MCF 10A (cell line): ENCODE measurements at regions of chr1 and their contacts with region 1.

Region 1: DNA sequence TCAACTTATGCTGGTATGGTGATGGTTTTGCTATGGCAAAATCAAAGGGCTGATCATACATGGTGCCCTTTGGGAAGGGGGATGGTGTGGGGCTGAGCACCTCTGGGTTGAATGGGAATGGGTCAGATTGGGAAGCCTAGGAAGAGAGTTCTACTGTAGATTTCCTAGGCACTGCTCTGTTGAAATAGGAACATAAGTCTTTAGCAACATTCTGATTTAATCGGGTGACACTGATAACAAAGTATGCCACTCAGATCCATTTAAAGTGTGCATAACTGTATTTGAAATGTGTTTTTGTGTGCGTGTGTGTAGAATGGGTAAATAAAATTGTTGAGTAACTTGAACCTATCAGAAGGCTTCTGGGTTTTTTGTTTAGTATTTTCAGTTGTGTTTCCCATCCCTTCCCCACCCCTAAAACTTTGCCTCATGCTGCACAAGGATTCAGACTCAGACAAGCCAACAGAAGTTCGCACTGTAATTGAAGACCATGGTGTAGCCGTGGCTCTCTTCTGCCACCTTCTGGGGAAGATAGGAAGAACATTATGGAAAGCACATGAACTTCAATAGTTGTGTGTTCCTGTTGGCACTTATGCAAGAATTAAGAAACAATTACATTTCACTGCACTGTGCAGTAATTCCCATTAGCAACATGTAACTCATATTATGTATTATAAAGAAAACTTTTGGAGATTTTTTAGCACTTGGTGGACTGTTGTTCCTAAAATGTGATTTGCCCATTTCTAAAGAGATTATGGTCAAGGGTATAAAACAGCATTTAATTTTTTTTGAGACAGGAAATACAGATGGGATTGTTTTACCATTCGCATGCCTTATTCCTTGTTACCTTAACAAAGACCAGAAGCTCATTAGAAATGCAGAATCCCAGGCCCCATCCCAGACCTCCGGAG is 10.9 kb upstream of the C4BPB start:
- DNase-seq: peak; percentile 96
- H3K4me3 Mint-ChIP-seq: no peak overlapping the region
- H3K27ac Mint-ChIP-seq: no peak overlapping the region
- H3K4me1 Mint-ChIP-seq: peaks cover 23% of the 10 kb centered on the region
- H3K27me3 Mint-ChIP-seq: peaks cover 7% of the 10 kb centered on the region
- CTCF ChIP-seq: peak; percentile 99

Region 2: GRCh38 chr1:206635080-206635977 is 442.4 kb before region 1 on chr1 and contains the start of gene DYRK3:
- CTCF ChIA-PET with region 1: no interaction called
- POLR2A ChIA-PET with region 1: interaction called, 4 read pairs
- intact Hi-C with region 1: loop called (anchors 10 kb)
- DNase-seq: peak; percentile 99
- H3K4me3 Mint-ChIP-seq: peak within 1 kb of the TSS; percentile 89
- H3K27ac Mint-ChIP-seq: peak within 1 kb of the TSS; percentile 82
- H3K4me1 Mint-ChIP-seq: peaks cover 38% of the 10 kb centered on the region
- H3K27me3 Mint-ChIP-seq: no peaks in the 10 kb centered on the region
- CTCF ChIP-seq: no peak
- total RNA-seq, gene DYRK3: 45.4 and 58.5 TPM in 2 replicates

Region 3: DNA sequence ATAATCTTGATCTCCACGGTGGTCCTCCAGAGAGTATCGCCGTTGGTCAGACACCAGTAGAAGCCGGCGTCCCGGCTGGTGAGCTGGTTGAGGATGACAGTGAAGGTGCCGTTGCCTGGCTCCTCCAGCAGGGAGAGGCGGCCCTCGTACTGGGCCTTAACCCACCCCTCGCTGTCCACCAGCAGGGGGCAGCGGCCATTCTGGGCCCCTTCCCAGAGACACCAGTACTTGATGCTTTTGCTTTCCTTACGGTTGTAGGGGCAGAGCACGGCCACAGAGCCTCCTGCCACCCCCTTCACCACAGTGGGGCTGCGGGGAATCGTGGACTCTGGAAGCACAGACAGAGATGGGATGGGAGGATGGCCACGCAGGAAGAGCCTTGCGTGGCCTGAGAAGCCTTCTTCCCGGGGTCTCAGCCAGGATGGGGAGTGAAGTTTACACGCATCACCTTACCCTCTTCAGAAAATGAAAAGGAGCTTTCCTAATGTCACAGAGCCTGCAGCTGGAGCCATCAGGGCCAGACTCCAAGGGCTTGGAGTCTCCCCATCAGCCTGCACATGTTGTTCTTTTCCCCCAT is 142.1 kb before region 1 on chr1:
- CTCF ChIA-PET with region 1: no interaction called
- POLR2A ChIA-PET with region 1: no interaction called
- intact Hi-C with region 1: loop called (anchors 1 kb)
- DNase-seq: peak; percentile 62
- H3K4me3 Mint-ChIP-seq: no peak overlapping the region
- H3K27ac Mint-ChIP-seq: no peak overlapping the region
- H3K4me1 Mint-ChIP-seq: peaks cover 8% of the 10 kb centered on the region
- H3K27me3 Mint-ChIP-seq: no peaks in the 10 kb centered on the region
- CTCF ChIP-seq: peak; percentile 59

Region 4: DNA sequence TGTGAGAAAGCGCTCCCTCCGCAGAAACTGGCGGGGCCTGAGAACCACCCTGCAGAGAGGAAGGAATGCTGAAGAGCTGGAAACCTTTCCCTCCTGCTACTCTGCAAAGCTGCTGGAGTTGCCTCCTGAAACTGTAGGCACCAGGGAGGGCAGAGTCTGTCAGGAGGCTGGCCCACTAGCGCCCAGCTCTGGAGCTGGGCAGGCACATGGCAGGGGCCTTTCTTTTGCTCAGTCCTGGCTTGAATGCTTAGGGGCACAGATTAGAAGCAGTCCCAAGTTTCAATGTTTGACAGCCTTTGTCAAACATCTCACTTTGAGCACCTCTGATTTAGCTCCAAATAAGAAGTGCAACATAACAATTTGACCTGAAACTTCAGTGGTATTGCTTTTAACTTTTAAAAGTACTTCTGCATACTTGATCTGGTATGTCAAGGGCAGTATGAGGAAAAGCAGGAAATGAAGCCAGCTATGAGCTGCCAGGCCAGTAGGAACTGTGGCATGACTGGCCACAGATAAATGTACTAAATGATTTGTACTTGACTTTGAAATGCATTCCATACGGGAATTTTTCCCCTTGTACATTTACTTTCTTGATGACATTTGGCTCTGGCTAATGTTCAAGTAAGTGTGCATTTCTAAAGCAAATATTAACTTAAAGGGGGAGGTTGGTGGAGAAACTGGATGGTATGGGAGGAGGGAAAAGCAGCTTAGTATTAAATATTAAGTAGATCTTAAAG is 52.4 kb before region 1 on chr1:
- CTCF ChIA-PET with region 1: interaction called, 43 read pairs
- POLR2A ChIA-PET with region 1: interaction called, 164 read pairs
- intact Hi-C with region 1: no loop called
- DNase-seq: no peak
- H3K4me3 Mint-ChIP-seq: peak overlapping the region; percentile 3
- H3K27ac Mint-ChIP-seq: peak overlapping the region; percentile 99
- H3K4me1 Mint-ChIP-seq: peaks cover 73% of the 10 kb centered on the region
- H3K27me3 Mint-ChIP-seq: no peaks in the 10 kb centered on the region
- CTCF ChIP-seq: no peak

Region 5: DNA sequence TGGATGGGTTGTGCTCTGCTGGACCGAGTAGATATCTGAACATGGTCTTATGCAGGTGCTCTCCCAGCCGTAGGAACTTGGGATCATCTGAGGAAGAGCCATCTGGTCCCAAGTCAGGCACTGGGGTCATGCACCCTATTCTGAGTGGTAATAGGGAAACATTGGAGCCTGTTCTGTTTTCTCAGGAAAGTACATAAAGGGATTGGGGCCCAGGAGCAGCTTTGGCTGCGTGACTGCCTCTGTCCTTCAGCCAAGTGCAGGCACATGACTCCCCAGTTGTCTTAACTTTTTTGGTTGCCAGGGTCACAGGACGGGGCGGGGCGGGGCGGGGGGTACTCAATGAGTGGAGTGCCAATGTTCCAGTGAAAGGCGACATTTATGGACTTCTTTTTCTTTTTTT is 13.2 kb before region 1 on chr1:
- CTCF ChIA-PET with region 1: interaction called, 146 read pairs
- POLR2A ChIA-PET with region 1: interaction called, 399 read pairs
- intact Hi-C with region 1: no loop called
- DNase-seq: no peak
- H3K4me3 Mint-ChIP-seq: no peak overlapping the region
- H3K27ac Mint-ChIP-seq: no peak overlapping the region
- H3K4me1 Mint-ChIP-seq: no peaks in the 10 kb centered on the region
- H3K27me3 Mint-ChIP-seq: no peaks in the 10 kb centered on the region
- CTCF ChIP-seq: no peak

Region 6: GRCh38 chr1:207115269-207115668 is 37.5 kb after region 1 on chr1:
- CTCF ChIA-PET with region 1: no interaction called
- POLR2A ChIA-PET with region 1: no interaction called
- intact Hi-C with region 1: no loop called
- DNase-seq: no peak
- H3K4me3 Mint-ChIP-seq: no peak overlapping the region
- H3K27ac Mint-ChIP-seq: no peak overlapping the region
- H3K4me1 Mint-ChIP-seq: no peaks in the 10 kb centered on the region
- H3K27me3 Mint-ChIP-seq: peaks cover 15% of the 10 kb centered on the region
- CTCF ChIP-seq: no peak